A673 (cell line): ENCODE measurements at regions of chr1 and their contacts with region 1.

Region 1: DNA sequence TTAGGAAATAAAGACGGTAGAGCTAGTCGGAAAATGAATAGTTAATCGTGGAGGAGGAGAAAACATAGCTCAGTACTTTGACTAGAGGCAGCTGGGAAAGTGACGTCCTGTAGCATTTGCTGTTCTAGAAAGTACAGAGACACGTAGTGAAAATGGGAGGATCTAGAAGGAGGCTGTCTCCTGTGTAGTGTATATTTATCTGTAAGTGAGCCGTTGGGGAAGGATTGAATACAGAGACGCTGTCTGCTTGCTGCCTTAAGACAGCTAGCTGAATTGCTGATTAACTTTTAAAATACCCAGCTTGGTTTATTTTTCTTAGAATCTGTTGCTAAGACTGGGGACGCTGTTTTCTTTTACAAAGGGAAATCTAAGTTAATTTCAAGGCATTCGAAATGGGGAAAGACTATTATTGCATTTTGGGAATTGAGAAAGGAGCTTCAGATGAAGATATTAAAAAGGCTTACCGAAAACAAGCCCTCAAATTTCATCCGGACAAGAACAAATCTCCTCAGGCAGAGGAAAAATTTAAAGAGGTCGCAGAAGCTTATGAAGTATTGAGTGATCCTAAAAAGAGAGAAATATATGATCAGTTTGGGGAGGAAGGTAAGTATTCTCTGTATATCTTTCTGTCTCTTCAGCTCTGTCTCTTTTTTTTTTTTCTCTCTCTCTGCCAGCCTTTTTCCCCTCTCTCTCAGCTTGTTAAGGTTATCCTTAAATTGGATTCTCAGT is at the start of gene DNAJB4:
- DNase-seq: peak; percentile 98
- H3K4me3 ChIP-seq: peak within 1 kb of the TSS; percentile 60
- H3K27ac ChIP-seq: peak within 1 kb of the TSS; percentile 99
- H3K4me1 ChIP-seq: peaks cover 32% of the 10 kb centered on the region
- H3K27me3 ChIP-seq: no peaks in the 10 kb centered on the region
- CTCF ChIP-seq: no peak
- total RNA-seq, gene DNAJB4: 28.3 and 34.5 TPM in 2 replicates

Region 2: DNA sequence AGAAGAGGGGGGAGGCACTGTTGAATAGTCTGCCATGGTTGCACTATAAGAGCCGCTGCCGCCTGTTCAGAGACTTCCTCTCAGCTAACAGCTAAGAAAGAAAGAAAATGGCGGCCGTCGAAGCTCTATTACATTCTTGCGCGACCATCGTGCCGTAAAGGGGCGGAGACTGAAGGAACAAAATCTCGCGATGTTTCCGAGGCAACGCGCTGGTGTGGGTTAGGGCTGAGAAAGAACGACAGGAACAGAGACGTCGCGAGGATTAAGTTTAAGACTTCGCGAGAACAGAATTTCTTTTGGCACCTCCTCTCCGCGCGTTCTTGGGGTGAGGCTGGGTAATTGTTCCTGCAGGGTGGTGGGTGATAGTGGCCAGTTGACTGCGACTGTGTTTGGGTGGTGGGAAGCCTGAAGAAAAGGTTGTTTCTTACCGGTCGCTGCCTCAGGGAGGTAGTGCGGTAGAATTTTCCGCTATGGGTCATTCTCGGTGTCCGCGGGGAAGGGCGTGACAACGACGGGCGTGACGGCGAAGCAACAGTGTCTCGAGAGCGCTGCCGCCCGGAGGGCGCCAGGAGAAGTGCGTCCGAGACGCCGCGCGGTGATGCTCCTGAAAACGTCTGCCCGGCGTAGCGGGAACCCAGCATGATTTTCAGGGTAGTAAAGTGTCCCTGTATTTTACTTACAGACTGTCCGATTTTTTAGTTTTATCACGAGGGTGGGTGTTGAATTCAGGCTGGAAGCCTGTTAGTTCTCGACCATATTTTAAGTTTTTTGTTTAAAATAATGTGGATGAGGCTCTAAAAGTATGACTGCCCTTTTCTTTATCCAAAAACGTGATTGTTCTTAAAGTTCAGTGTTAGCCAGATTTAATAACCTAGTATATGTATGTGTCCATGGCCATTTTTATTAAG is 25.7 kb before region 1 on chr1 and contains the start of gene FUBP1:
- CTCF ChIA-PET with region 1: interaction called, 5 read pairs
- POLR2A ChIA-PET with region 1: interaction called, 16 read pairs
- intact Hi-C with region 1: loop called (anchors 1 kb)
- DNase-seq: peak; percentile 99
- H3K4me3 ChIP-seq: peak within 1 kb of the TSS; percentile 78
- H3K27ac ChIP-seq: peak within 1 kb of the TSS; percentile 96
- H3K4me1 ChIP-seq: peaks cover 39% of the 10 kb centered on the region
- H3K27me3 ChIP-seq: no peaks in the 10 kb centered on the region
- CTCF ChIP-seq: peak; percentile 78
- total RNA-seq, gene FUBP1: 195 and 213 TPM in 2 replicates

Region 3: GRCh38 chr1:78237364-78237916 is 232.6 kb after region 1 on chr1:
- CTCF ChIA-PET with region 1: no interaction called
- POLR2A ChIA-PET with region 1: no interaction called
- intact Hi-C with region 1: no loop called
- DNase-seq: no peak
- H3K4me3 ChIP-seq: no peak overlapping the region
- H3K27ac ChIP-seq: no peak overlapping the region
- H3K4me1 ChIP-seq: no peaks in the 10 kb centered on the region
- H3K27me3 ChIP-seq: no peaks in the 10 kb centered on the region
- CTCF ChIP-seq: no peak